G401 (cell line): ENCODE measurements at regions of chr1 and their contacts with region 1.

Region 1: GRCh38 chr1:156012051-156012817 is 8.5 kb downstream of the SSR2 start:
- DNase-seq: no peak

Region 2: GRCh38 chr1:155884031-155884960 is 127.9 kb before region 1 on chr1:
- in situ Hi-C with region 1: no loop called
- DNase-seq: peak; percentile 30

Region 3: DNA sequence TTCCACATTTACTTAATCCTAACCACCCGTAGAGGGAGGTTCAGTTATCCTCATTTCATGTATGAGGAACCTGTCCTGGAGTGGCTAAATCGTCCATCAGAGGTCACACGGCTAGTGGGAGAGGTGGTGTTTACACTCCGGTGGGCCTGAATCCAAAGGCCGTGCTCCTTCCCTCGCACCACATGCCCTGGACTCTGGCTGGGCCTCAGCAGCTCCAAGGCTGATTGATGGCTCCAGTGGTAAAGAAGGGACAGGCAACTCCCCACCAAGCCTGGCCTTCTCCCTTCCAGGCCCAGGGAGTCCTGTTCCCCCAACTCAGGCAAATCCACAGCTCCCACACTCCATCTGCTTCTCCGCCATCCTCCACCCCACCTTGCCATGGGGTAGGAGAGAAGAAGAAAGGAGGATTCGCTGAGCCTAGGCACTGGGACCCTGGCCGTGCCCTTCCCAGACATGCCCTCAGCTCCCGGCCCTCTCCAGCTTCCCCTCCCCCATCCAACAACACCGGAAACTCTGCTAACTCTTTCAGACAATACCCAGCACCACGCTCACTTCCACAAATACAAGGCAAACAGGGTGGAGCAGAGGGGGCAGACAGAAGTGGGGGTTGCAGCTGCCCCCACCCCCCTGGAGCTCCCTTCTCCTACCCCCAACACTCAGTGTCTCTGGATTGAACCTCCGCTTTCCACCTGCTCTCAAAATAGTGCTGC is 44.7 kb before region 1 on chr1:
- in situ Hi-C with region 1: loop called (anchors 5 kb)
- DNase-seq: peak; percentile 62